IMR-90 (cell line): ENCODE measurements at regions of chr1 and their contacts with region 1.

Region 1: DNA sequence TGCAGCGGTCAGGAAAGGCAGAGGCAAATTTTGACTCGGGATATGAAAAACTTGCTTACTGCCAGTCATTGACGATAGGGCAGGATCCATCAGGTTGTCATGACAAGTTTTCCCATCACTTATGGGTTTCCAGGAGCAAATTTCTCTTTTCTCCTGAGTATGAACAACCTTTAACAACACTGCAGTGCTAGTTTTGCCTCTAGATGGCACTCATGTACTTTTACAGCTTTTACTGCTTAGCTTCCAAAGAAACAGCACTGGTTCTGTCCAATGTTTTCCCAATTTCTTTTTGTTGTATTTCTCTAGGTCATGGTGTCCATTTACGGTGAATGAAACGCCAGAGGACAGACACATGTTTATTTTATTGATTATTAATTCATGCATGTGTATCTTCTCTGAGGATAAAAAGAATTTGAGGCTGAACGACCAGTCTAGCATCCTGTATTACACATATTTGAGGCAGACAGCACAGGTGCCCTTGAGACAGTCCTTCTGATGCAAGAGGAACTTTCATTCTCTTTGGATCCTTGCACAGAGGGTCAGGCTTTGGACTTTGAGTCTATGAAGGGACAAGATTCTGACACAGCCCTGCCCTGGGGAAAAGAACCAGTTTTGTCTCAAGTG is 112.3 kb upstream of the TRABD2B start:
- DNase-seq: peak; percentile 61
- ATAC-seq: peak; percentile 90
- H3K4me3 ChIP-seq: no peak overlapping the region
- H3K27ac ChIP-seq: no peak overlapping the region
- H3K4me1 ChIP-seq: no peaks in the 10 kb centered on the region
- H3K27me3 ChIP-seq: no peaks in the 10 kb centered on the region
- CTCF ChIP-seq: peak; percentile 83
- POLR2A ChIP-seq: no peak
- RAD21 ChIP-seq: peak; percentile 85

Region 2: GRCh38 chr1:48202030-48202752 is 92.7 kb after region 1 on chr1:
- CTCF ChIA-PET with region 1: interaction called, 5 read pairs
- POLR2A ChIA-PET with region 1: no interaction called
- dilution Hi-C with region 1: no loop called
- in situ Hi-C with region 1: loop called (anchors 10 kb)
- intact Hi-C with region 1: loop called (anchors 1 kb)
- DNase-seq: peak; percentile 81
- ATAC-seq: peak; percentile 97
- H3K4me3 ChIP-seq: no peak overlapping the region
- H3K27ac ChIP-seq: no peak overlapping the region
- H3K4me1 ChIP-seq: no peaks in the 10 kb centered on the region
- H3K27me3 ChIP-seq: no peaks in the 10 kb centered on the region; the same call in 1 of the 2 replicates
- CTCF ChIP-seq: peak; percentile 87
- POLR2A ChIP-seq: no peak
- RAD21 ChIP-seq: peak; percentile 65

Region 3: DNA sequence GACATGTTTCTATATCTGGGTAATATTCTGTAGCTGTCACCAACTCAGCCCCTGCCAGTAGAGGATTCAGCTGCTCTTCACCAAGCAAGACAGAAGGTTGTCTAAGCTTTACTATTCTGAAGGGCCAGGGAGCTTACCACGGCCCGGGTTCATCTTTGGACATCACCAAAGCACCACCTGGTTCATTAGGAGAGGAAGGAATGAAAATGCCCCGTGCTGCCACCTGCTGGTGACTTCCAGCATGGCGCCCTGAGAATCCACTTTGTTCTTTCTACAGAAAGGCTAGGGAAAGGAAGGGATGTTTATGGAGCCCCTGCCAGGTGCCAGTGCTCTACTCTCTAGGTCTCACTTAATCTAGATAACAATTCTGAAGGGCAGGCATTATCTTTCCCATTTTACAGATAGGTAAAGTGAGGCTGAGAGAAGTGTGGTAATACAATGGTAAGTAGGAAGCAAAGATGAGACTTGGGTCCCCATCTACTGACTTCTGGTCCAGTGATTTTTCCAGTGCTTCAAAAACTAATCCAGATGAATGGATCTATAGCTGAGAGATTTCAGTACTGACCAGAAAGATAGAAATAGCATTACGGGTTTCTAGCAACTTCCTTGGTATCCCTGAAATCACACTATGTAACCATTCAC is 587.7 kb after region 1 on chr1:
- CTCF ChIA-PET with region 1: no interaction called
- POLR2A ChIA-PET with region 1: no interaction called
- dilution Hi-C with region 1: no loop called
- in situ Hi-C with region 1: loop called (anchors 25 kb)
- intact Hi-C with region 1: no loop called
- DNase-seq: peak; percentile 21
- ATAC-seq: peak; percentile 75; the same call in 1 of the 2 replicates
- H3K4me3 ChIP-seq: no peak overlapping the region
- H3K27ac ChIP-seq: no peak overlapping the region
- H3K4me1 ChIP-seq: no peaks in the 10 kb centered on the region
- H3K27me3 ChIP-seq: no peaks in the 10 kb centered on the region; the same call in 1 of the 2 replicates
- CTCF ChIP-seq: peak; percentile 66
- POLR2A ChIP-seq: no peak
- RAD21 ChIP-seq: peak; percentile 34; the same call in 1 of the 2 replicates